Naive thymus-derived CD4-positive, alpha-beta T cell (primary cell): ENCODE measurements at regions of chr2 and their contacts with region 1.

Region 1: GRCh38 chr2:109348671-109349550 is 219.9 kb downstream of the SH3RF3 start:
- DNase-seq: peak in 7 of 9 donors; percentile 68 to 86 (median 80)
- ATAC-seq: peak; percentile 96
- H3K4me3 ChIP-seq: peak overlapping the region; percentile 43
- H3K4me3 Mint-ChIP-seq: peak overlapping the region; percentile 69 to 85 (median 78)
- H3K27ac ChIP-seq: peak overlapping the region; percentile 68
- H3K27ac Mint-ChIP-seq: peak overlapping the region; percentile 68 to 96 (median 93)
- H3K4me1 ChIP-seq: peaks cover 24 to 53% of the 10 kb centered on the region in 2 donors
- H3K4me1 Mint-ChIP-seq: peaks cover 23 to 75% (median 68%) of the 10 kb centered on the region in 7 donors
- H3K27me3 ChIP-seq: no peaks in the 10 kb centered on the region
- H3K27me3 Mint-ChIP-seq: peaks cover 0 to 16% (median 0%) of the 10 kb centered on the region in 5 donors

Region 2: GRCh38 chr2:108786354-108787199 is 562.3 kb before region 1 on chr2 and contains the start of gene CCDC138:
- CTCF ChIA-PET with region 1: no interaction called
- POLR2A ChIA-PET with region 1: no interaction called
- intact Hi-C with region 1: loop called in 1 of 2 experiments (anchors 5 kb)
- DNase-seq: peak; percentile 86 to 93 (median 91)
- ATAC-seq: peak; percentile 98
- H3K4me3 ChIP-seq: peak within 1 kb of the TSS; percentile 88
- H3K4me3 Mint-ChIP-seq: peak within 1 kb of the TSS; percentile 88 to 100 (median 97)
- H3K27ac ChIP-seq: peak within 1 kb of the TSS; percentile 90
- H3K27ac Mint-ChIP-seq: peak within 1 kb of the TSS; percentile 69 to 99 (median 97)
- H3K4me1 ChIP-seq: peaks cover 6 to 13% of the 10 kb centered on the region in 2 donors
- H3K4me1 Mint-ChIP-seq: peaks cover 6 to 21% (median 17%) of the 10 kb centered on the region in 7 donors
- H3K27me3 ChIP-seq: no peaks in the 10 kb centered on the region
- H3K27me3 Mint-ChIP-seq: no peaks in the 10 kb centered on the region
- total RNA-seq, gene CCDC138: 2.7 to 10.5 (median 7.5) TPM

Region 3: GRCh38 chr2:108927936-108928659 is 420.8 kb before region 1 on chr2:
- CTCF ChIA-PET with region 1: no interaction called
- POLR2A ChIA-PET with region 1: no interaction called
- intact Hi-C with region 1: loop called in 1 of 2 experiments (anchors 1 kb)
- DNase-seq: peak in 6 of 9 donors; percentile 33 to 59 (median 50)
- ATAC-seq: peak; percentile 38
- H3K4me3 ChIP-seq: no peak overlapping the region
- H3K4me3 Mint-ChIP-seq: no peak overlapping the region
- H3K27ac ChIP-seq: no peak overlapping the region
- H3K27ac Mint-ChIP-seq: peak overlapping the region in 5 of 9 donors; percentile 0 to 28 (median 4)
- H3K4me1 ChIP-seq: peaks cover 0 to 5% of the 10 kb centered on the region in 2 donors
- H3K4me1 Mint-ChIP-seq: peaks cover 2 to 34% (median 25%) of the 10 kb centered on the region in 7 donors
- H3K27me3 ChIP-seq: no peaks in the 10 kb centered on the region
- H3K27me3 Mint-ChIP-seq: no peaks in the 10 kb centered on the region

Region 4: DNA sequence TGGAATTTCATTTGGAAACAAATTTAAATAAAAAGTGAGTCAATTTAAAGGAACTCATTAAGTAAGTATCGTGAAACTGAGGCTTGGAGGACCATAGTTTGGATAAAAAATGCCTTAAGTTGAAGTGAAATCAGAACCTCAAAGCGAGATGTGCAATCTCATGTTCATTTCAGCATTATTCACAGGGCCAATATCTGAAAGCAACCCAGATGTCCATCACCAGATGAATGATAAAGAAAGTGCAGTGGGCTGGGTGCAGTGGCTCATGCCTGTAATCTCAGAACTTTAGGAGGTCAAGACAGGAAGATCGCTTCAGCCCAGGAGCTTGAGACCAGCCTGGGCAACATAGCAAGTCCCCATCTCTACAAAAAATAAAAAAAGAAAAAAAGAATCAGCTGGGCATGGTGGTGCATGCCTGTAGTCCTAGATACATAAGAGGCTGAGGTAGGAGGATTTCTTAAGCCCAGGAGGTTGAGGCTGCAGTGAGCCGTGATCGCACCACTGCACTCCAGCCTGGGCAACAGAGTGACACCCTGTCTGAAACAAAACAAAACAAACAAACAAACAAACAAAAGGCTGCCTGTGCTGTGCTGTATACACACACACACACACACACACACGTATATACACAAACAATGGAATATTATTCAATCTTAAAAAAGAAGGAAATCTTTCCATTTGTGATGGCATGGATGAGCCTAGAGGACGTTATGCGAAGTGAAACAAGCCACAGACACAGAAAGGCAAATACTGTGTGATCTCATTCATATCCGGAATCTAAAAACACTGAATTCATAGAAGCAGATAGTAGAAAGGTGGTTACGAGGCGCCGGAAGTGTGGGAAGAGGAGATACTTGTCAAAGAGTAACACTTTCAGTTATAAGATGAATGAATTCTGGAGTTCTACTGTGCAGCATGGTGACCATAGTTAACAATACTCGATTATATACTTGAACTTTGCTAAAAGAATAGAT is 205.4 kb before region 1 on chr2:
- CTCF ChIA-PET with region 1: interaction called, 4 read pairs
- POLR2A ChIA-PET with region 1: interaction called, 3 read pairs
- intact Hi-C with region 1: loop called in 1 of 2 experiments (anchors 5 kb)
- DNase-seq: peak in 8 of 9 donors; percentile 60 to 82 (median 76)
- ATAC-seq: peak; percentile 86
- H3K4me3 ChIP-seq: peak overlapping the region; percentile 4
- H3K4me3 Mint-ChIP-seq: peak overlapping the region; percentile 39 to 80 (median 70)
- H3K27ac ChIP-seq: peak overlapping the region; percentile 37
- H3K27ac Mint-ChIP-seq: peak overlapping the region; percentile 6 to 92 (median 84)
- H3K4me1 ChIP-seq: peaks cover 13 to 23% of the 10 kb centered on the region in 2 donors
- H3K4me1 Mint-ChIP-seq: peaks cover 20 to 62% (median 51%) of the 10 kb centered on the region in 7 donors
- H3K27me3 ChIP-seq: no peaks in the 10 kb centered on the region
- H3K27me3 Mint-ChIP-seq: peaks cover 0 to 52% (median 0%) of the 10 kb centered on the region in 5 donors

Region 5: DNA sequence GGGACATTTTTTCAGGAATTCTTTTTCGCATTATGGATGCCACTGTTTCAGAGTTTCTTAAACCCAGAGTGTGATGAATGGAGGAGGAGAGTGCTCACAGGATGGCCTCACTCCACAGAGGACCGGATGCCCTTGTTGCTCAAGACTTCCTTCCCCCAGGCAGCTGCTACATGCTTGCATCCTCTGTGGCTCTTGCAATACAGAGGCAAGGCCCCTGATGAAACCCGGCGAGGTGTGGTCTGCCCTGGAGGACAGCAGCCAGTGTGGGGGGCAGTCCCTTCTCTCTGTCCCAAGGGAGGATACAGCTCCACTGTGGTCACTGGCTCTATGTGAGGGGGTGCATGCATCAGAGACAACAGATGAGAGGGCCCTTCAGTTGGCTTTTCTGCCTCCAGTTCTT is 110.3 kb before region 1 on chr2:
- CTCF ChIA-PET with region 1: no interaction called
- POLR2A ChIA-PET with region 1: no interaction called
- intact Hi-C with region 1: loop called in 1 of 2 experiments (anchors 1 kb)
- DNase-seq: peak in 8 of 9 donors; percentile 18 to 64 (median 53)
- ATAC-seq: peak; percentile 94
- H3K4me3 ChIP-seq: no peak overlapping the region
- H3K4me3 Mint-ChIP-seq: peak overlapping the region; percentile 7 to 73 (median 43)
- H3K27ac ChIP-seq: no peak overlapping the region
- H3K27ac Mint-ChIP-seq: peak overlapping the region in 4 of 9 donors; percentile 54 to 87 (median 71)
- H3K4me1 ChIP-seq: peaks cover 6 to 12% of the 10 kb centered on the region in 2 donors
- H3K4me1 Mint-ChIP-seq: peaks cover 25 to 59% (median 44%) of the 10 kb centered on the region in 7 donors
- H3K27me3 ChIP-seq: no peaks in the 10 kb centered on the region
- H3K27me3 Mint-ChIP-seq: peaks cover 0 to 10% (median 0%) of the 10 kb centered on the region in 5 donors

Region 6: DNA sequence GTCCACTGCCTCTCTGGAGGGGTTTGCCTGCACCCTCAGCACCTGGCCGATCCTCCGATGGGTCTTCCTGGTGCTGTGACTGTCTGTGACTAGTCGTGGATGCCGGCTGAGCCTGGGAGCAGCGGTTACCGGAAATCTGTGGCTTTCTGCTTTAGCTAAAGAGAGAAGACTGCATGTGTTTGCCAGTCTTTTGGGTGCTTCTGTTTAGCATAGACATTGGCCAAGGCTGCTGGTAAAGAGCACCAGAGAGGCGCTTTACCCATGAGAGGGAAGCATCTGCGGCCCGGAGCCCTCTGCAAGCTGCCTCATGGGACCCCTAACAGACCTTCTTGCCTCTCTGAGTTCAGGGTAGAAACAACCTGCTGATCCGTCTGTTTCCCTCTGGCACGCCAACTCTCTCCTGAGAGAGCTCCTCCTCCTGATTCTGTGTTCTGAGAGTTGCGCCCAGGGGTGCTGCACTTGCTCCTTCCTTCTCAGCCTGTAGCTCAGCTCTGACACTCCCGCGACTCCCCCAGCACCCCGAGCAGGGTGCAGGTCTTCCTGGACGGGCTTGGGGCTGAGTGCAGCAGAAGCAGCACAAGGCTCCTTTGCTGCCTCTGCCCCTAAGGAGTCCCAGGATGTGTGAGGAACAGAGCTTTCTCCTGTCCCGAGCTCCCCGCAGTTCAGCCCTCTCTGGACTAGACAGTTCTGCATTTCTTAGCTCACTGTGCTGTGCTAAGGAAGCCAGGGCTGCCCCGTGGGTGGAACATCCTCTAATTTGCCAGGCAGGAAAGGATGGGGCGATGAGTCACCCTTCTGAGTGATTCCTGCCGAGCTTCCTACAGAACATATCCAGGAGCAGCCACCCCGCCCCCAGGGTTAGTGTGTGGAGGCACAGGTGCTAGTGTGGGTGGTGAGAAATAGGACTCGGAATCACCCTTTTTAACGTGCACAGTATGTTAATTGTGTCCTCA is 16.7 kb before region 1 on chr2:
- CTCF ChIA-PET with region 1: interaction called, 9 read pairs
- POLR2A ChIA-PET with region 1: interaction called, 7 read pairs
- intact Hi-C with region 1: loop called (anchors 1 to 2 kb)
- DNase-seq: peak in 6 of 9 donors; percentile 34 to 49 (median 43)
- ATAC-seq: peak; percentile 77
- H3K4me3 ChIP-seq: peak overlapping the region; percentile 32
- H3K4me3 Mint-ChIP-seq: peak overlapping the region; percentile 69 to 90 (median 84)
- H3K27ac ChIP-seq: peak overlapping the region; percentile 16
- H3K27ac Mint-ChIP-seq: peak overlapping the region; percentile 16 to 89 (median 72)
- H3K4me1 ChIP-seq: peaks cover 12 to 21% of the 10 kb centered on the region in 2 donors
- H3K4me1 Mint-ChIP-seq: peaks cover 26 to 70% (median 57%) of the 10 kb centered on the region in 7 donors
- H3K27me3 ChIP-seq: no peaks in the 10 kb centered on the region
- H3K27me3 Mint-ChIP-seq: peaks cover 0 to 33% (median 0%) of the 10 kb centered on the region in 5 donors